ENCODE measurements at regions of chr7 and their contacts with region 1.

Region 1: GRCh38 chr7:107168233-107169119 is at the start of gene HBP1:
- DNase-seq: peak; percentile 99
- ATAC-seq: peak; percentile 80
- H3K4me3 ChIP-seq: peak within 1 kb of the TSS; percentile 88 to 97 (median 95)
- H3K4me3 Mint-ChIP-seq: peak within 1 kb of the TSS; percentile 94
- H3K27ac ChIP-seq: peak within 1 kb of the TSS; percentile 98 to 99
- H3K27ac Mint-ChIP-seq: peak within 1 kb of the TSS; percentile 100
- H3K4me1 ChIP-seq: peaks cover 25 to 37% of the 10 kb centered on the region in 2 donors
- H3K4me1 Mint-ChIP-seq: peaks cover 38% of the 10 kb centered on the region
- H3K27me3 ChIP-seq: no peaks in the 10 kb centered on the region
- H3K27me3 Mint-ChIP-seq: peaks cover 12% of the 10 kb centered on the region
- CTCF ChIP-seq: no peak
- total RNA-seq, gene HBP1: 127 and 137 TPM in 2 replicates

Region 2: GRCh38 chr7:105531792-105532671 is 1636.4 kb before region 1 on chr7 and contains the start of gene RINT1:
- CTCF ChIA-PET with region 1: no interaction called
- POLR2A ChIA-PET with region 1: no interaction called
- intact Hi-C with region 1: loop called (anchors 5 kb)
- DNase-seq: peak; percentile 95
- ATAC-seq: peak; percentile 97
- H3K4me3 ChIP-seq: peak within 1 kb of the TSS; percentile 81 to 98 (median 88)
- H3K4me3 Mint-ChIP-seq: peak within 1 kb of the TSS; percentile 92
- H3K27ac ChIP-seq: peak within 1 kb of the TSS; percentile 74 to 91
- H3K27ac Mint-ChIP-seq: peak within 1 kb of the TSS; percentile 97
- H3K4me1 ChIP-seq: peaks cover 18 to 22% of the 10 kb centered on the region in 2 donors
- H3K4me1 Mint-ChIP-seq: peaks cover 24% of the 10 kb centered on the region
- H3K27me3 ChIP-seq: no peaks in the 10 kb centered on the region
- H3K27me3 Mint-ChIP-seq: no peaks in the 10 kb centered on the region
- CTCF ChIP-seq: peak; percentile 84
- total RNA-seq, gene RINT1: 27.2 and 28.0 TPM in 2 replicates

Region 3: GRCh38 chr7:105691733-105692564 is 1476.5 kb before region 1 on chr7:
- CTCF ChIA-PET with region 1: no interaction called
- POLR2A ChIA-PET with region 1: no interaction called
- intact Hi-C with region 1: loop called (anchors 2 kb)
- DNase-seq: peak; percentile 90
- ATAC-seq: peak; percentile 77
- H3K4me3 ChIP-seq: peak overlapping the region; percentile 61 to 94 (median 80)
- H3K4me3 Mint-ChIP-seq: peak overlapping the region; percentile 95
- H3K27ac ChIP-seq: peak overlapping the region; percentile 90 to 97
- H3K27ac Mint-ChIP-seq: peak overlapping the region; percentile 99
- H3K4me1 ChIP-seq: peaks cover 5 to 29% of the 10 kb centered on the region in 2 donors
- H3K4me1 Mint-ChIP-seq: peaks cover 54% of the 10 kb centered on the region
- H3K27me3 ChIP-seq: no peaks in the 10 kb centered on the region
- H3K27me3 Mint-ChIP-seq: no peaks in the 10 kb centered on the region
- CTCF ChIP-seq: no peak

Region 4: DNA sequence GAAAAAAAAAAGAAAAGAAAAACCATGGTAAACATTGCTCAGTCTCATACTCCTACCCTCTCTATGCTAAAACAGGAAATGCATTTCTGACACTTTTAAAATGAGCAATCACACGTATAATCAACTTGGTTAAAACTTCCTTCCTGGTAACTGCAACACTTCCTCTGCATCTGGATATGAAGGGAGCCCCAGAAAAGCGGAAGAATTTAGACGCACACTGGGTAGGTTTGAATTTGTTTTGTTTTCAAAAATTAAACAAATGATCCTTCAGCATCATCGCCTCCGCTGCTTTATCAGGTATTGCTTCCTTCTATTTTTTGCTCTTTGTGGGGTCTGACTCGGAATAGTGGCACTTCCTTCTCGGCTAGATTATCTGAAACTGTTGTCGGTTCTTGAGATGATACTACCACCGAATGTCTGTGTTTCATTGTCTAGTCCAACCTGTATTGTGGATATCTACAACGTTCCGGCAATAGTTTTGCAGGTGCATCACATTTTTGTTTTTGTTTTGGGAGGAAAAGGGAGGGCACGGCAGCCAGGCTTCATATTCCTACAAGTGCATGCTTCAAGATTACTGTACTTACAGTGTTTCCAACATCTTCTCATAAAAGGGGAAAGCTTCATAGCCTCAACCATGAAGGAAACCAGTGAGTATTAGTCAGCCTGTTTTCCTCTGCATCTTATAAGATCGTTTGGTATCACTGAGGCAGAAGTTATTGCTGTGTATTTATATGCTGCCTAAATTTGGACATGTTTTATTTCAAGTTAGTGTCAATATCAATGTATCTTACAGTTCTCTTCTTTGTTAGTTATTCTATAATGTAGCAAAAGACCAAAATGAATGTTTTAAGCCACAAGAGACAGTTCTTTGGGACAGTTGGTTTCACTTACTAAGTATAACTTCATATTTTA is 303.1 kb before region 1 on chr7 and contains the start of gene PIK3CG:
- CTCF ChIA-PET with region 1: interaction called, 6 read pairs
- POLR2A ChIA-PET with region 1: interaction called, 13 read pairs
- intact Hi-C with region 1: loop called (anchors 1 kb)
- DNase-seq: peak; percentile 90
- ATAC-seq: peak; percentile 75
- H3K4me3 ChIP-seq: peak within 1 kb of the TSS; percentile 72 to 100 (median 81)
- H3K4me3 Mint-ChIP-seq: peak within 1 kb of the TSS; percentile 89
- H3K27ac ChIP-seq: peak within 1 kb of the TSS; percentile 92
- H3K27ac Mint-ChIP-seq: peak within 1 kb of the TSS; percentile 86
- H3K4me1 ChIP-seq: peaks cover 49 to 57% of the 10 kb centered on the region in 2 donors
- H3K4me1 Mint-ChIP-seq: peaks cover 77% of the 10 kb centered on the region
- H3K27me3 ChIP-seq: no peaks in the 10 kb centered on the region
- H3K27me3 Mint-ChIP-seq: no peaks in the 10 kb centered on the region
- CTCF ChIP-seq: no peak
- total RNA-seq, gene PIK3CG: 44.8 and 46.9 TPM in 2 replicates

Region 5: DNA sequence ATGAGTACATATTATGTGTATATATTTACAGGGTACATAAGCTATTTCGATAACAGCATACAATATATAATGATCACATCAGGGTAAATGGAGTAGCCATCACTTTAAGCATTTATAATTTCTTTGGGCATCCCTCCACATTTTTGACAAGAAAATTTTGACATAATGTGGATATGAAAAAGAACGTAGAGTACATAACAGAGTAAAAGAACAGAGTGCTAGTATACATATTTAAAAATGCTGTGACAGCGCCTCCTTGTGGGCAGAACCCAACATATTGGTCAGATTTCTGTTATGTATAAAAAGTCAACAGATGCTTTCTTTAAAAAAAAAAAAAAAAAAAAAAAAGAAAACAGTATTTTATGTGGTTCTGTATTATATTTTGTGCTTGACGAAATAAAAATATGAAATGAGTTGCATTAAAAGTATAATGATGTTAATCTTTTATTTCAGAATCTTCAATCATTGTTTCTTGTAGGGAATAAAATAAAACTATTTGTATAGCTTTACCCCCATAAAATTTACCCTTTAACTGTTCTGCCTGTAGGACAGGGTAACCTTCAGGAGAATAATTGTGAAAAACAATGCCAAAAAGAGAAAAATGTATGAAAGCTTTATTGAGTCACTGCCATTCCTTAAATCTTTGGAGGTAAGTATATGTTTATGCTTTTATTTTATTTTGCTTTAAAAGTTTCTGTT is 18.0 kb before region 1 on chr7:
- CTCF ChIA-PET with region 1: interaction called, 108 read pairs
- POLR2A ChIA-PET with region 1: interaction called, 7 read pairs
- intact Hi-C with region 1: loop called (anchors 2 kb)
- DNase-seq: peak; percentile 83
- ATAC-seq: peak; percentile 79
- H3K4me3 ChIP-seq: no peak overlapping the region
- H3K4me3 Mint-ChIP-seq: no peak overlapping the region
- H3K27ac ChIP-seq: no peak overlapping the region
- H3K27ac Mint-ChIP-seq: no peak overlapping the region
- H3K4me1 ChIP-seq: no peaks in the 10 kb centered on the region
- H3K4me1 Mint-ChIP-seq: peaks cover 4% of the 10 kb centered on the region
- H3K27me3 ChIP-seq: no peaks in the 10 kb centered on the region
- H3K27me3 Mint-ChIP-seq: no peaks in the 10 kb centered on the region
- CTCF ChIP-seq: peak; percentile 86

Region 6: GRCh38 chr7:107563775-107564552 is 395.5 kb after region 1 on chr7 and contains the starts of genes COG5 and DUS4L:
- CTCF ChIA-PET with region 1: no interaction called
- POLR2A ChIA-PET with region 1: interaction called, 6 read pairs
- intact Hi-C with region 1: loop called (anchors 10 kb)
- DNase-seq: peak; percentile 92
- ATAC-seq: peak; percentile 93
- H3K4me3 ChIP-seq: peak within 1 kb of the TSS; percentile 86 to 98 (median 93)
- H3K4me3 Mint-ChIP-seq: peak within 1 kb of the TSS; percentile 88
- H3K27ac ChIP-seq: peak within 1 kb of the TSS; percentile 88 to 94
- H3K27ac Mint-ChIP-seq: peak within 1 kb of the TSS; percentile 94
- H3K4me1 ChIP-seq: peaks cover 18 to 23% of the 10 kb centered on the region in 2 donors
- H3K4me1 Mint-ChIP-seq: peaks cover 50% of the 10 kb centered on the region
- H3K27me3 ChIP-seq: no peaks in the 10 kb centered on the region
- H3K27me3 Mint-ChIP-seq: no peaks in the 10 kb centered on the region
- CTCF ChIP-seq: no peak
- total RNA-seq, gene COG5: 73.0 and 74.8 TPM in 2 replicates
- total RNA-seq, gene DUS4L: 17.6 and 18.7 TPM in 2 replicates

Region 7: DNA sequence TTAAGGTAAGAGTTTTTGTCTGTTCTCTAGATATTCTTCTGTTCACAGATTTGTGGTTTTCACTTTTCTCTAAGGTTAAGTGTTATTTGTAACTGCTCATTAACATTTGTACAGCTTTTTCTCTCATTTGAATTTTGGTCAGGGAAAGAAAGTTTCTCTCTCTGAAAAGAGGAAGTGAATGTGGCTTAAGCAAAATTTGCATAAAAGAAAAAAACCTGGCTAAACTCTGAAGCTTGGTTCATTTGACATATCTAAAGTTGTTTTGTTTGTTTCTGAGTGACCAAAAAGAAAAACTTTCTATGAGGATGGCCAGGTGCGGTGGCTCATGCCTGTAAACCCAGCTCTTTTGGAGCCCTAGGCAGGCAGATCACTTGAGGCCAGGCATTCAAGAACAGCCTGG is 470.1 kb after region 1 on chr7:
- CTCF ChIA-PET with region 1: no interaction called
- POLR2A ChIA-PET with region 1: interaction called, 6 read pairs
- intact Hi-C with region 1: loop called (anchors 2 kb)
- DNase-seq: peak; percentile 82
- ATAC-seq: peak; percentile 77
- H3K4me3 ChIP-seq: peak overlapping the region in 4 of 5 experiments; percentile 7 to 52 (median 26)
- H3K4me3 Mint-ChIP-seq: peak overlapping the region; percentile 77
- H3K27ac ChIP-seq: peak overlapping the region; percentile 78 to 85
- H3K27ac Mint-ChIP-seq: peak overlapping the region; percentile 96
- H3K4me1 ChIP-seq: peaks cover 44 to 56% of the 10 kb centered on the region in 2 donors
- H3K4me1 Mint-ChIP-seq: peaks cover 56% of the 10 kb centered on the region
- H3K27me3 ChIP-seq: no peaks in the 10 kb centered on the region
- H3K27me3 Mint-ChIP-seq: no peaks in the 10 kb centered on the region
- CTCF ChIP-seq: no peak

Measured in B cell (primary cell).